PC-3 (cell line): ENCODE measurements at regions of chr13 and their contacts with region 1.

Region 1: GRCh38 chr13:59658027-59658737 is 505.5 kb downstream of the DIAPH3 start:
- DNase-seq: no peak
- ATAC-seq: no peak
- H3K4me3 ChIP-seq: no peak overlapping the region
- H3K27ac ChIP-seq: no peak overlapping the region
- H3K4me1 ChIP-seq: no peaks in the 10 kb centered on the region
- H3K27me3 ChIP-seq: no peaks in the 10 kb centered on the region
- CTCF ChIP-seq: no peak

Region 2: DNA sequence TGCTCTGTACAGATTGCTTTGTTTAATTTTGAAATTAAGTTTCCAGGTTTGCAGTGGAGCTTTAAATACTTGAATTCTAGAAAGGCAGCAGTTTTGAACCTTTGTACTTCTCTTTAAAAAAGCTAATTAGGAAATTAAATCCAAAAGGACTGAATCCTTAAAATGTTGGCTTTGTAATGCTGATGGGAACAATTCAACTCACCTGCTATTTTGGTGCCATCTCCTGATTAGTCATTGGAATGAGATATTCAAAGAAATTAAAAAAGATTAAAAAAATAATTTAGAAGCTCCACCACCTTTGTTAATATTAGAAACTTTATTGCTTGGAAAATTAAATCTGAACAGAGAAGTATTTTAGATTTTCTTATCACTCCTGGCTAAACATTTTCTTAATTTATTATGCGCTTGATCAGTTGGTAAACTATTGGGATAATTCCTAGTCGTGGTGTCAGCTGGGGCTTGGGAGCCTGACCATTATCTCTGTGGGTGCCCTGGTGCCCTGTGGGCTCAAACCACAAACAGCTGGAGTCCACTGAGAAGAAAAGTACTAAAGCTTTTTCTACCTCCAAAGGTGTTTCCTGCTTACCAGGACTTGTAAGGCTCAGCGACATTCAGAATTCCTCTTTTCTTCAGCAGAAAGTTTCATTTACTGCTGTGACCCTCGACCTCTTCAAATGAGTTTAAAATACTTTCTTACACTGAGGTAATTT is 34.8 kb before region 1 on chr13:
- CTCF ChIA-PET with region 1: no interaction called
- POLR2A ChIA-PET with region 1: interaction called, 10 read pairs
- intact Hi-C with region 1: no loop called
- DNase-seq: no peak
- ATAC-seq: no peak
- H3K4me3 ChIP-seq: no peak overlapping the region
- H3K27ac ChIP-seq: no peak overlapping the region
- H3K4me1 ChIP-seq: no peaks in the 10 kb centered on the region
- H3K27me3 ChIP-seq: peaks cover 15% of the 10 kb centered on the region; the same call in 1 of the 2 replicates
- CTCF ChIP-seq: no peak